OCI-LY7 (cell line): ENCODE measurements at regions of chr12 and their contacts with region 1.

Region 1: DNA sequence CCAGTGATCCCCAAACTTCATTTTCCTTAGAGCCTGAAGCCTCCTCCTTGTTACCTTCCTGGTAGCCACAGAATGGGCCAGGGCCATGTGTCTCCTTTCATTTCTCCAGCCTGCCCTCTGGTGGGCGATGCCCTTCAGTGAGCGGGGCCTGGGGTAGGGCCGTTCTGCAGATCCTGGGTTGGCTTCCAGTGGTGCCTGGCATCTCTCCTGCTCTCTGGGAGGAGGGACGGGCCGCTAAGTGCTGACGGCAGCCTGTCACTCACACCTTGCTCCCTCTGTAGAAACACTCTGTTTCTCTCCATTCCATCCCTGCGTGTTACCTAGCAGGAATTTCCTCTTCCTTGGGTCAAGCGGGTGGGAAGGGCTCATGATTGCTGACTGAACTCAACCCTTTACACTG is 232.1 kb downstream of the CACNA1C start:
- DNase-seq: peak; percentile 87
- H3K4me3 ChIP-seq: no peak overlapping the region
- H3K27ac ChIP-seq: peak overlapping the region; percentile 5
- H3K4me1 ChIP-seq: peaks cover 27% of the 10 kb centered on the region
- CTCF ChIP-seq: peak; percentile 92

Region 2: GRCh38 chr12:2057041-2057794 is 227.6 kb before region 1 on chr12:
- CTCF ChIA-PET with region 1: interaction called, 5 read pairs
- POLR2A ChIA-PET with region 1: interaction called, 3 read pairs
- intact Hi-C with region 1: loop called (anchors 1 kb)
- DNase-seq: peak; percentile 78
- H3K4me3 ChIP-seq: no peak overlapping the region
- H3K27ac ChIP-seq: no peak overlapping the region
- H3K4me1 ChIP-seq: no peaks in the 10 kb centered on the region
- CTCF ChIP-seq: peak; percentile 93

Region 3: DNA sequence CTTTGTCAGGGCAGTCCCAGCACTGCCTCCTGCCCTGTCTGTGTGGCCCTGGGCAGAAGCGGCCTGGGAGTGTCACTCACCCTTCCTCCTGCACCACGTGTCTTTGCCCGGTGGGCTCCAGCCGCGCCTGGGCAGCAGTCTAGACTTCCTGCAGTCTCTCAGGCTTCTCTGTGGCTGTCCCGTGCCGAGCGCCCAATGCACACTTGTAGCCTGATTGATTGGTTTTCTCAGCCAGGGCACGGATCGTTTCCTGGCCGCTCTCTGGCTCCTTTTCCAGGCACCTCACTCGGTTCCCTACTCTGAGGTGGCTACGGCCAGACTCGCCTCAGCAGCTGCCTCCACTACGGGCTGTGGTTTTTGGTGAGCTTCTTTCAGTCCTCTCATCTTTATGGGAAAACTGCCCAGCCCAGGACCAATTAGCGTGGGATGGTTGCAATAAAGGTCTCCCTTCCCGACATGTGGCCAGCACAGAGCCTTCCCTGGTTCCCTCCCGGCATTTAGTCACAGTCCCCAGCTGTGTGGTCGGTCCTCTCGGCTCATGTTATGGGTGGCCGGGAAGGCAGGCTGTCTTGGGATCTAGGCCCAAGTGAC is 99.0 kb before region 1 on chr12:
- CTCF ChIA-PET with region 1: interaction called, 6 read pairs
- POLR2A ChIA-PET with region 1: interaction called, 6 read pairs
- intact Hi-C with region 1: loop called (anchors 2 kb)
- DNase-seq: no peak
- H3K4me3 ChIP-seq: no peak overlapping the region
- H3K27ac ChIP-seq: peak overlapping the region; percentile 68
- H3K4me1 ChIP-seq: peaks cover 62% of the 10 kb centered on the region
- CTCF ChIP-seq: no peak

Region 4: GRCh38 chr12:2248901-2249381 is 35.9 kb before region 1 on chr12:
- CTCF ChIA-PET with region 1: interaction called, 3 read pairs
- POLR2A ChIA-PET with region 1: interaction called, 4 read pairs
- intact Hi-C with region 1: loop called (anchors 1 kb)
- DNase-seq: peak; percentile 94
- H3K4me3 ChIP-seq: peak overlapping the region; percentile 48
- H3K27ac ChIP-seq: peak overlapping the region; percentile 99
- H3K4me1 ChIP-seq: peaks cover 93% of the 10 kb centered on the region
- CTCF ChIP-seq: no peak